CD4-positive, alpha-beta memory T cell (primary cell): ENCODE measurements at regions of chr2 and their contacts with region 1.

Region 1: DNA sequence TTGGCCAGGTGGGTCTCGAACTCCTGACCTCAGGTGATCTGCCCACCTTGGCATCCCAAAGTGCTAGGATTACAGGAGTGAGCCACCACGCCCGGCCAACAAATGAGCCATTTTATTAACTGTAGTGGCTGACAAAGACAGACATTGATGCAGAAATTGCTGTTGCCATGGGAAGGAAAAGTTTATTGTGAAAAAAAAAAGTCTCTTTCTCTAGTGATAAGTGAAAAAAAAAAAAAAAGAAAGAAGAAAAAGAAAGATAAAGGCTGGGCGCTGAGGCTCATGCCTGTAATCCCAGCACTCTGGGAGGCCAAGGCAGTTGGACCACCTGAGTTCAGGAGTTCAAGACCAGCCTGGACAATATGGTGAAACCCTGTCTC is 39.8 kb upstream of the RAB1A start:
- DNase-seq: no peak
- H3K4me3 ChIP-seq: no peak overlapping the region
- H3K4me3 Mint-ChIP-seq: no peak overlapping the region
- H3K27ac ChIP-seq: no peak overlapping the region
- H3K27ac Mint-ChIP-seq: no peak overlapping the region
- H3K4me1 ChIP-seq: no peaks in the 10 kb centered on the region
- H3K4me1 Mint-ChIP-seq: no peaks in the 10 kb centered on the region
- H3K27me3 ChIP-seq: no peaks in the 10 kb centered on the region
- H3K27me3 Mint-ChIP-seq: no peaks in the 10 kb centered on the region

Region 2: DNA sequence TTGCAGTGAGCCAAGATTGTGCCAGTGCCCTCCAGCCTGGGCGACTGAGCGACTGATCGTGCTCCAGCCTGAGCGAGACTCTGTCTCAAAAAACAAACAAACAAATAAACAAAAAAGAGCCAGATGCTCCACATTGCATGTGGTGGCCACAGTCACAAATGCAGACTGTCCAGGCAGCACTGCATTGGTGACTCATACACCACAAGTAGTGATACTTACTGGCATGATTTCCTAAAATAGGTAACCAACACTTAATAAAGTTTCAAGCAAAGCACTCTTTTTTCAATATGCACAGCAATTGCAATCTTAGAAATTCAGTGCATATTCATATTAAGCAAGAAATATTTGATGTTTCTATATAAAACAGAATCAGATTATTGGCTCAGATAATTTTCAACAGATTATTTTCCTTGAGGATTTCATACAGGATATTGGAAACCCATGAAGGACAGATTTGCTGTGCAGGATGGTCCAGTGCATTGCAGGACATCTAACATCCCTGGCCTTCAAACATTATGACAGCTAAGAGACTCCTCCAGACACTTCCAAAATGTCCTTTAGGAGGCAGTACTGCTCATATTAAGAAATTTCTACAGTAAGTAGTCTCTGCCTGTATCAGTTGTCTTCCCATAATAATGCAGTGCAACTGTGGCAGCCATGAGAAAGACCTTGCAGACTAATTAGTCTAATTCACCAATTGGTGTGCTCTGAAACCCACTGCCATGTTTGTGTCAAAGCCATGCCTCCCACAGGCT is 191.1 kb before region 1 on chr2:
- CTCF ChIA-PET with region 1: interaction called, 13 read pairs
- POLR2A ChIA-PET with region 1: interaction called, 3 read pairs
- intact Hi-C with region 1: no loop called
- DNase-seq: peak in 4 of 5 donors; percentile 12 to 19 (median 17)
- H3K4me3 ChIP-seq: no peak overlapping the region
- H3K4me3 Mint-ChIP-seq: no peak overlapping the region
- H3K27ac ChIP-seq: no peak overlapping the region
- H3K27ac Mint-ChIP-seq: no peak overlapping the region
- H3K4me1 ChIP-seq: no peaks in the 10 kb centered on the region
- H3K4me1 Mint-ChIP-seq: no peaks in the 10 kb centered on the region
- H3K27me3 ChIP-seq: no peaks in the 10 kb centered on the region
- H3K27me3 Mint-ChIP-seq: no peaks in the 10 kb centered on the region

Region 3: GRCh38 chr2:65040400-65041261 is 129.1 kb before region 1 on chr2:
- CTCF ChIA-PET with region 1: interaction called, 8 read pairs
- POLR2A ChIA-PET with region 1: no interaction called
- intact Hi-C with region 1: loop called (anchors 2 kb)
- DNase-seq: peak; percentile 67 to 74 (median 69)
- H3K4me3 ChIP-seq: no peak overlapping the region
- H3K4me3 Mint-ChIP-seq: peak overlapping the region in 2 of 8 donors; percentile 38 to 76
- H3K27ac ChIP-seq: no peak overlapping the region
- H3K27ac Mint-ChIP-seq: no peak overlapping the region
- H3K4me1 ChIP-seq: peaks cover 8% of the 10 kb centered on the region
- H3K4me1 Mint-ChIP-seq: peaks cover 4 to 11% (median 8%) of the 10 kb centered on the region in 4 donors
- H3K27me3 ChIP-seq: no peaks in the 10 kb centered on the region
- H3K27me3 Mint-ChIP-seq: no peaks in the 10 kb centered on the region

Region 4: GRCh38 chr2:65064728-65065552 is 104.8 kb before region 1 on chr2:
- CTCF ChIA-PET with region 1: interaction called, 46 read pairs
- POLR2A ChIA-PET with region 1: interaction called, 3 read pairs
- intact Hi-C with region 1: loop called (anchors 1 kb)
- DNase-seq: peak; percentile 55 to 63 (median 57)
- H3K4me3 ChIP-seq: no peak overlapping the region
- H3K4me3 Mint-ChIP-seq: peak overlapping the region in 3 of 8 donors; percentile 29 to 35 (median 31)
- H3K27ac ChIP-seq: no peak overlapping the region
- H3K27ac Mint-ChIP-seq: peak overlapping the region in 6 of 7 donors; percentile 2 to 66 (median 22)
- H3K4me1 ChIP-seq: peaks cover 44% of the 10 kb centered on the region
- H3K4me1 Mint-ChIP-seq: peaks cover 20 to 76% (median 38%) of the 10 kb centered on the region in 4 donors
- H3K27me3 ChIP-seq: no peaks in the 10 kb centered on the region
- H3K27me3 Mint-ChIP-seq: no peaks in the 10 kb centered on the region

Region 5: GRCh38 chr2:65158557-65158956 is 11.2 kb before region 1 on chr2:
- CTCF ChIA-PET with region 1: interaction called, 15 read pairs
- POLR2A ChIA-PET with region 1: no interaction called
- intact Hi-C with region 1: no loop called
- DNase-seq: no peak
- H3K4me3 ChIP-seq: no peak overlapping the region
- H3K4me3 Mint-ChIP-seq: no peak overlapping the region
- H3K27ac ChIP-seq: no peak overlapping the region
- H3K27ac Mint-ChIP-seq: no peak overlapping the region
- H3K4me1 ChIP-seq: peaks cover 9% of the 10 kb centered on the region
- H3K4me1 Mint-ChIP-seq: peaks cover 7 to 11% (median 10%) of the 10 kb centered on the region in 4 donors
- H3K27me3 ChIP-seq: no peaks in the 10 kb centered on the region
- H3K27me3 Mint-ChIP-seq: peaks cover 0 to 1% of the 10 kb centered on the region in 2 donors

Region 6: GRCh38 chr2:65240657-65241056 is 70.9 kb after region 1 on chr2:
- CTCF ChIA-PET with region 1: no interaction called
- POLR2A ChIA-PET with region 1: no interaction called
- intact Hi-C with region 1: no loop called
- DNase-seq: no peak
- H3K4me3 ChIP-seq: no peak overlapping the region
- H3K4me3 Mint-ChIP-seq: peak overlapping the region in 4 of 8 donors; percentile 4 to 54 (median 32)
- H3K27ac ChIP-seq: no peak overlapping the region
- H3K27ac Mint-ChIP-seq: peak overlapping the region in 3 of 7 donors; percentile 61 to 79 (median 77)
- H3K4me1 ChIP-seq: peaks cover 76% of the 10 kb centered on the region
- H3K4me1 Mint-ChIP-seq: peaks cover 27 to 68% (median 40%) of the 10 kb centered on the region in 4 donors
- H3K27me3 ChIP-seq: no peaks in the 10 kb centered on the region
- H3K27me3 Mint-ChIP-seq: no peaks in the 10 kb centered on the region

Region 7: GRCh38 chr2:65320042-65320725 is 150.4 kb after region 1 on chr2:
- CTCF ChIA-PET with region 1: no interaction called
- POLR2A ChIA-PET with region 1: no interaction called
- intact Hi-C with region 1: no loop called
- DNase-seq: peak in 2 of 5 donors; percentile 8 to 11
- H3K4me3 ChIP-seq: no peak overlapping the region
- H3K4me3 Mint-ChIP-seq: no peak overlapping the region
- H3K27ac ChIP-seq: no peak overlapping the region
- H3K27ac Mint-ChIP-seq: peak overlapping the region; percentile 13 to 71 (median 44)
- H3K4me1 ChIP-seq: no peaks in the 10 kb centered on the region
- H3K4me1 Mint-ChIP-seq: peaks cover 5 to 17% (median 12%) of the 10 kb centered on the region in 4 donors
- H3K27me3 ChIP-seq: no peaks in the 10 kb centered on the region
- H3K27me3 Mint-ChIP-seq: no peaks in the 10 kb centered on the region